Aorta (tissue), 5 donors: ENCODE measurements at regions of chr6 and their contacts with region 1.

Region 1: GRCh38 chr6:26415791-26416190 is 13.7 kb downstream of the BTN3A1 start:
- DNase-seq: no peak
- ATAC-seq: no peak
- H3K4me3 ChIP-seq: no peak overlapping the region
- H3K27ac ChIP-seq: no peak overlapping the region
- H3K4me1 ChIP-seq: no peaks in the 10 kb centered on the region
- H3K27me3 ChIP-seq: no peaks in the 10 kb centered on the region

Region 2: DNA sequence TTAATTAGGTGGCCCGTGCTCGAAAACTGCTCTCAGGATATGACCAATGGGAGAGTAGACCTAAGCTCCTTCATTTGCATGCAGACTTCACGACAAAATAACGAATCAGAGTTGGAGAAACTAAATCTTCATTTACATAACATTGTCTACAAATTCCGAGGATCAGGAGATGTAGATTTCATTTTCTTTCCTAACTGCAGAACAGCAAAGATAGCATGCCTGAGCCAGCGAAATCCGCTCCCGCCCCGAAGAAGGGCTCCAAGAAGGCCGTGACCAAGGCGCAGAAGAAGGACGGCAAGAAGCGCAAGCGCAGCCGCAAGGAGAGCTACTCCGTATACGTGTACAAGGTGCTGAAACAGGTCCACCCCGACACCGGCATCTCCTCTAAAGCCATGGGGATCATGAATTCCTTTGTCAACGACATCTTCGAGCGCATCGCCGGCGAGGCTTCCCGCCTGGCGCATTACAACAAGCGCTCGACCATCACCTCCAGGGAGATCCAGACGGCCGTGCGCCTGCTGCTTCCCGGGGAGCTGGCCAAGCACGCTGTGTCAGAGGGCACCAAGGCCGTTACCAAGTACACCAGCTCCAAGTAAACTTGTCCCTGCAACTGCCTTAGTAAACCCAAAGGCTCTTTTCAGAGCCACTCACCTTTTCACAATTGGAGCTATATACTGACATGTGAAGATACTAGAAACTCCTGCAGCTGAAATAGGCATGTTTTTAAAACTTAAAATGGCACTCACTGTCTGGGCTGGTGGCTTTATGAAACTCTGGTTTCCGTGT is 232.0 kb before region 1 on chr6:
- intact Hi-C with region 1: no loop called
- DNase-seq: peak; percentile 77 to 87
- ATAC-seq: peak; percentile 93
- H3K4me3 ChIP-seq: peak overlapping the region; percentile 73 to 82
- H3K27ac ChIP-seq: peak overlapping the region; percentile 63 to 79
- H3K4me1 ChIP-seq: no peaks in the 10 kb centered on the region
- H3K27me3 ChIP-seq: no peaks in the 10 kb centered on the region

Region 3: GRCh38 chr6:26454631-26455030 is 38.8 kb after region 1 on chr6:
- intact Hi-C with region 1: loop called in 1 of 2 experiments (anchors 5 kb)
- DNase-seq: no peak
- ATAC-seq: no peak
- H3K4me3 ChIP-seq: no peak overlapping the region
- H3K27ac ChIP-seq: no peak overlapping the region
- H3K4me1 ChIP-seq: no peaks in the 10 kb centered on the region
- H3K27me3 ChIP-seq: no peaks in the 10 kb centered on the region